GM12878 (cell line): ENCODE measurements at regions of chr1 and their contacts with region 1.

Region 1: DNA sequence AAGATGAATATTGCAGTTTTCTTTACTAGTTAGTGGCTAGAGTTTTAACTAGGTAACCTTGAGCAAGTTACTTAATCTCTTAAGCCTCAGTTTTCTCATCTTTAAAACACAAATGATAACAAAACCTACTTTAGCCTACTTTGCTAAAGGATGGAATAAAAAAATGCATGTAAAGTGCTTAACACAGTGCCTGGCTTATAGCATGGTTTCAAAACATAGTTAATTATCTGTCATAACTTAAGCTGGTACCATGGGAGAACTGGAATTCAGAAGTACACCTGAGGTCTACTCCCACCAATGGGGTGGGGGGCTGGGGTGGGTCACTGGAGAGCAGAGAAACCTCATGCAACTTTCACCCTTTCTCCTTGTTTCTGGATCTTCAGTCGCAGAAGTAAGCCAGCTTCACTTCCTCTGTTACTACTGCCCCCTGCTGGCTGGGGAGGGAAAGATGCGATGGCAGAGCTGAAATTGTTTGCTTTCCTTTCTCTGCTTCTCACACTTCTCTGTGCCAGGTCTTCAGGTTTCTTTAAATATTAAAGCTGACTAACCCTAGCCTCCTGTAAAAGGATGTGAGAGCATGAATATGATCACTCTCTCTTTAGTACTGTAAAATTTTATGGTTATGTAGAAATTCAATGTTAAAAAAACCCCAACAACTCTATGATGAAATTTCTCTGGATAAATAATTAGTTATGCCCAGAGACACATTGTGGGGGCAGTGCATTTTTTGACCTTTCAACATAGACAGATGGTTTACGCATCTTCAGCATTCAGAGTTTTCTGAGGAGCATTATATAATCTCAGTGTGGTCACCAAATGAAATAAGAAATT is 324.2 kb downstream of the HLX start:
- DNase-seq: peak; percentile 30
- ATAC-seq: peak; percentile 87
- H3K4me3 ChIP-seq: no peak overlapping the region
- H3K27ac ChIP-seq: no peak overlapping the region
- H3K4me1 ChIP-seq: no peaks in the 10 kb centered on the region
- H3K27me3 ChIP-seq: no peaks in the 10 kb centered on the region
- CTCF ChIP-seq: peak; percentile 80 to 93 (median 90)
- EP300 ChIP-seq: no peak
- POLR2A ChIP-seq: no peak
- RAD21 ChIP-seq: peak; percentile 98

Region 2: GRCh38 chr1:220700556-220701179 is 502.8 kb before region 1 on chr1:
- CTCF ChIA-PET with region 1: no interaction called
- POLR2A ChIA-PET with region 1: no interaction called
- RAD21 ChIA-PET with region 1: no interaction called
- SMC1A ChIA-PET with region 1: no interaction called
- in situ Hi-C with region 1: no loop called
- intact Hi-C with region 1: no loop called
- DNase-seq: no peak
- ATAC-seq: no peak
- H3K4me3 ChIP-seq: no peak overlapping the region
- H3K27ac ChIP-seq: no peak overlapping the region
- H3K4me1 ChIP-seq: no peaks in the 10 kb centered on the region
- H3K27me3 ChIP-seq: no peaks in the 10 kb centered on the region
- CTCF ChIP-seq: no peak
- EP300 ChIP-seq: no peak
- POLR2A ChIP-seq: no peak
- RAD21 ChIP-seq: no peak

Region 3: GRCh38 chr1:220873868-220874655 is 329.4 kb before region 1 on chr1:
- CTCF ChIA-PET with region 1: interaction called, 134 read pairs
- POLR2A ChIA-PET with region 1: no interaction called
- RAD21 ChIA-PET with region 1: interaction called, 44 read pairs
- SMC1A ChIA-PET with region 1: interaction called, 94 read pairs
- in situ Hi-C with region 1: loop called (anchors 5 kb)
- intact Hi-C with region 1: loop called (anchors 1 kb)
- DNase-seq: no peak
- ATAC-seq: peak; percentile 47
- H3K4me3 ChIP-seq: no peak overlapping the region
- H3K27ac ChIP-seq: no peak overlapping the region
- H3K4me1 ChIP-seq: peaks cover 10% of the 10 kb centered on the region
- H3K27me3 ChIP-seq: 0 out of 4 replicates have a peak, but pooled peaks cover 0 to 4% of the 10 kb centered on the region in 2 experiments
- CTCF ChIP-seq: peak; percentile 60 to 79 (median 65); a peak in 5 of 6 replicates
- EP300 ChIP-seq: no peak
- POLR2A ChIP-seq: no peak
- RAD21 ChIP-seq: peak; percentile 82

Region 4: DNA sequence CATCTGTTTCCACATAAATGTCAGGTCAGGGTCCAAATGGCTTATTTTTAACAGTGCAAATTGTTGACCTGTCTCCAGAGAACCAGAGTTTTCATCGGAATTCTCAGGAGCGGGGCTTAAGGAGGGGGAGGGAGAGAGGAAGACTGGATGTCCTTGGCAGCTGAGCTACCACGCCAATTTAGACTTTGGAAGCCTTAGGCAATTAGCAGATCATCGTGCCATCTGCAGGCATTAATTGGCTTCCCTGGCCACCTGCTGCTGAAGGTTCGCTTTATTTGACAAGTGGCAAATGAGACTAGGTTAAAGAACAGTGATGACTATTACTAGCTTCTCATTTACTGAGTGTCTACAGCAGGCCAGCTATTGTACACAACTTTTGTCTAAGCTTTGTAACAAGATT is 280.5 kb before region 1 on chr1:
- CTCF ChIA-PET with region 1: interaction called, 10 read pairs
- POLR2A ChIA-PET with region 1: no interaction called
- RAD21 ChIA-PET with region 1: interaction called, 4 read pairs
- SMC1A ChIA-PET with region 1: interaction called, 4 read pairs
- in situ Hi-C with region 1: no loop called
- intact Hi-C with region 1: no loop called
- DNase-seq: no peak
- ATAC-seq: no peak
- H3K4me3 ChIP-seq: no peak overlapping the region
- H3K27ac ChIP-seq: no peak overlapping the region
- H3K4me1 ChIP-seq: no peaks in the 10 kb centered on the region
- H3K27me3 ChIP-seq: no peaks in the 10 kb centered on the region
- CTCF ChIP-seq: no peak
- EP300 ChIP-seq: no peak
- POLR2A ChIP-seq: no peak
- RAD21 ChIP-seq: no peak

Region 5: DNA sequence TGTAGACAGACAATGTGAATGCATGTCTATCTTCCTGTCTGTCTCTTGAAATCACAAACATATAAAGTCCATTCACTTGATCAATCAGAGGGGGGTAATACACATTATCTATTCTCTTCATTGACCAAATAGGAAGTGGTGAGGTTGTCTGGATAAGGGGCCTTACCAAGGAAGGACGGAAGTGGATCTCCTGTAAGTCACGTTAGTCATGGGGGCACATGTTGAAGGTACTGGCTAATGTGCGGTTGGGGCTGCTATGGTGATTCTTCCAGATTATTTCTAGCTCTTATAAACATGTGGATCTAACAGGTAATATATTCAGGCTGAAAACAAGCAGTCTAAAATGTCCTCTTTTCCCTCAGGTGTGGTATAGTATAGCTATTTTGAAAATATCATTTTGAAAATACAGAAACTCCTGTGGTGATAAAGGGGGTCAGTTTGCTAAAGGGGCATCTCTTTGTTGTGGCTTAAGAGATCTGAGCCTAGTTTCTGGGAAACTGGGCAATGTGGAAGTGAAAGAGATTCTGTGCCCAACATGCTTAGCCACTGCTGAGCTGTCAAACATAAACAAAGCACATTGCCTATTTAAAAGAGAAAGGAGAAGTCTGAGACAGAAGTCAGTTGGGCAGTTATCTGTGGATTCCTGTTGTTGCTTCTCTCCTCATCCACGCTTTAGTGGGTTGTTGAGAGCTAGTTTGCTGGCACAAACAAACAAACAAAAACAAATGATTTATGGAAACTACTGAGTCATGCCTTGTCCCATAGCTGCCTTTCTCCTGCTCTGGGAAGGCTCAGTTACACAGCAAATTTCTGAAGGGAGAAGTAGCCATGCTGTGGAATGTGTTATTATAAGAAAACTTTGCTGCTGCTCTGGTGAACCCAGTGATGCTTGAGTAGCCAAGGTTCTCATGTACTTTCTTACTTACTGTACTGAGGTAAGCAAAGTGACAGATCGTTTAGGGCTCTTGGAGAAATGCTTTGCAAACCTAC is 157.3 kb before region 1 on chr1:
- CTCF ChIA-PET with region 1: interaction called, 14 read pairs
- POLR2A ChIA-PET with region 1: no interaction called
- RAD21 ChIA-PET with region 1: interaction called, 21 read pairs
- SMC1A ChIA-PET with region 1: interaction called, 17 read pairs
- in situ Hi-C with region 1: no loop called
- intact Hi-C with region 1: loop called (anchors 1 kb)
- DNase-seq: peak; percentile 92
- ATAC-seq: peak; percentile 94
- H3K4me3 ChIP-seq: 0 out of 2 replicates have a peak overlapping the region, but pooled peaks have one; percentile 9
- H3K27ac ChIP-seq: peak overlapping the region; percentile 77
- H3K4me1 ChIP-seq: peaks cover 24% of the 10 kb centered on the region
- H3K27me3 ChIP-seq: no peaks in the 10 kb centered on the region
- CTCF ChIP-seq: no peak
- EP300 ChIP-seq: peak; percentile 87 to 90
- POLR2A ChIP-seq: no peak
- RAD21 ChIP-seq: no peak

Region 6: GRCh38 chr1:221117548-221117951 is 85.9 kb before region 1 on chr1:
- CTCF ChIA-PET with region 1: interaction called, 8 read pairs
- POLR2A ChIA-PET with region 1: no interaction called
- RAD21 ChIA-PET with region 1: interaction called, 4 read pairs
- SMC1A ChIA-PET with region 1: interaction called, 10 read pairs
- in situ Hi-C with region 1: no loop called
- intact Hi-C with region 1: no loop called
- DNase-seq: no peak
- ATAC-seq: peak; percentile 58
- H3K4me3 ChIP-seq: no peak overlapping the region
- H3K27ac ChIP-seq: no peak overlapping the region
- H3K4me1 ChIP-seq: no peaks in the 10 kb centered on the region
- H3K27me3 ChIP-seq: no peaks in the 10 kb centered on the region
- CTCF ChIP-seq: no peak
- EP300 ChIP-seq: no peak
- POLR2A ChIP-seq: no peak
- RAD21 ChIP-seq: no peak

Region 7: DNA sequence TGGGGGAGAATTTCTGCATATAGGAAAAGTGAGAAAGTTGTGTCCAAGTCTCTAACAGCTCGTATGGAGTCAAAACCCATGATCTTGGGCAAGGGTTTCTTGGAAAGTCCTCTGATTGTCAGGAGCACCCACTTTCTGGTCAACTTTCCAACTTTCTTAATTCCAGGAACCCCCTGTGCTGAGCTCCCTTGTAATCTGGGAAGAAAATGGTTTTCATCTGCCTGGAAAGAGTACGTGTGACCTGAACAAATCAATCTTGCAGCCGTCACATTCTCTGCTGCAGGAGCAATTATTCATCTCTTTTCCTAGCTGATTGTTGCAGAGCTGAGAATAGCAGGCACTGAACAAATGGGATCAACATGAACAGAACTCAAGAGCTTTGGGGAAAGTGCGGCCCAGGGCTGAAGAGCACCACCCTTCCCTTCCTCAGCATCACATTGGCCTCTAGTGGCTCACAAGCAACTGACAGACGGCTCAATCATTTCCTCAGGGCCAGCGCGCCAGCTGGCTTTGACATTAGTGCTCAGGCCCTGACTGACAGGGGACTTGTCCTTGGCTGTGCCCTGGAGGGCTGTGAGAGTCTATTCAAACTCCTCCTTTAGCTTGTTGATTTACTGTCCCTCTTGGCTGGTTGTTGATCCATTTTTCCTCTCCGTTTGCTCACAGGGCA is 29.0 kb before region 1 on chr1:
- CTCF ChIA-PET with region 1: interaction called, 17 read pairs
- POLR2A ChIA-PET with region 1: no interaction called
- RAD21 ChIA-PET with region 1: interaction called, 17 read pairs
- SMC1A ChIA-PET with region 1: interaction called, 28 read pairs
- in situ Hi-C with region 1: no loop called
- intact Hi-C with region 1: loop called (anchors 5 kb)
- DNase-seq: no peak
- ATAC-seq: peak; percentile 66
- H3K4me3 ChIP-seq: no peak overlapping the region
- H3K27ac ChIP-seq: no peak overlapping the region
- H3K4me1 ChIP-seq: no peaks in the 10 kb centered on the region
- H3K27me3 ChIP-seq: no peaks in the 10 kb centered on the region; a peak in 1 of 4 replicates
- CTCF ChIP-seq: peak in 2 of 3 experiments; percentile 2 to 19; a peak in 2 of 6 replicates
- EP300 ChIP-seq: no peak
- POLR2A ChIP-seq: no peak
- RAD21 ChIP-seq: peak; percentile 39

Region 8: DNA sequence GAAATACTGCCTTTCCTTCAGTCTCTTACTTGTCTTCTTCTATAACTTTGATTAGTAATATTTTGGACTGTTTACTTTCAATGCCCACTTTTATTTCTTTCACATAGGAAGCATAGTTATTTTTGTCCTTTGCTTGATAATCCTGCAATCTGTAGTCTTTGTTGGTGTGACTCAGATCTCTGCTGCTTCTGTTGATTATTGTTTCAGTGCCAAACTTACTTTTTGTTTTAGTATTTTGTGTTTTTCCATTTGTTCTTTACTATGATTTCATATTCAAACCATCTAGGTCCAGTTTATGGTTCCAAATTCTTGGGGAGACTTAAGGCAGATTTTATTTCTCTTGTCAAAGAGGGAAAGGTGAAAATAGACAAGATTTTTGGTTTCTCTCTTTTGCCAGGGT is 75.7 kb after region 1 on chr1:
- CTCF ChIA-PET with region 1: no interaction called
- POLR2A ChIA-PET with region 1: no interaction called
- RAD21 ChIA-PET with region 1: no interaction called
- SMC1A ChIA-PET with region 1: no interaction called
- in situ Hi-C with region 1: no loop called
- intact Hi-C with region 1: no loop called
- DNase-seq: no peak
- ATAC-seq: no peak
- H3K4me3 ChIP-seq: no peak overlapping the region
- H3K27ac ChIP-seq: no peak overlapping the region
- H3K4me1 ChIP-seq: no peaks in the 10 kb centered on the region
- H3K27me3 ChIP-seq: no peaks in the 10 kb centered on the region
- CTCF ChIP-seq: no peak
- EP300 ChIP-seq: no peak
- POLR2A ChIP-seq: no peak
- RAD21 ChIP-seq: no peak

Region 9: GRCh38 chr1:221435504-221435904 is 232.1 kb after region 1 on chr1:
- CTCF ChIA-PET with region 1: interaction called, 14 read pairs
- POLR2A ChIA-PET with region 1: no interaction called
- RAD21 ChIA-PET with region 1: interaction called, 10 read pairs
- SMC1A ChIA-PET with region 1: interaction called, 19 read pairs
- in situ Hi-C with region 1: no loop called
- intact Hi-C with region 1: loop called (anchors 5 kb)
- DNase-seq: no peak
- ATAC-seq: peak; percentile 55
- H3K4me3 ChIP-seq: no peak overlapping the region
- H3K27ac ChIP-seq: no peak overlapping the region
- H3K4me1 ChIP-seq: 0 out of 2 replicates have a peak, but pooled peaks cover 4% of the 10 kb centered on the region
- H3K27me3 ChIP-seq: no peaks in the 10 kb centered on the region
- CTCF ChIP-seq: peak; percentile 78 to 90 (median 80)
- EP300 ChIP-seq: no peak
- POLR2A ChIP-seq: no peak
- RAD21 ChIP-seq: peak; percentile 88